Activated CD4-positive, alpha-beta T cell treated with anti-CD3 and anti-CD28 coated beads, Interleukin-2, amount 10 ng/mL, durations not matched to agents 24 days and 14 days (primary cell): ENCODE measurements at regions of chr7 and their contacts with region 1.

Region 1: DNA sequence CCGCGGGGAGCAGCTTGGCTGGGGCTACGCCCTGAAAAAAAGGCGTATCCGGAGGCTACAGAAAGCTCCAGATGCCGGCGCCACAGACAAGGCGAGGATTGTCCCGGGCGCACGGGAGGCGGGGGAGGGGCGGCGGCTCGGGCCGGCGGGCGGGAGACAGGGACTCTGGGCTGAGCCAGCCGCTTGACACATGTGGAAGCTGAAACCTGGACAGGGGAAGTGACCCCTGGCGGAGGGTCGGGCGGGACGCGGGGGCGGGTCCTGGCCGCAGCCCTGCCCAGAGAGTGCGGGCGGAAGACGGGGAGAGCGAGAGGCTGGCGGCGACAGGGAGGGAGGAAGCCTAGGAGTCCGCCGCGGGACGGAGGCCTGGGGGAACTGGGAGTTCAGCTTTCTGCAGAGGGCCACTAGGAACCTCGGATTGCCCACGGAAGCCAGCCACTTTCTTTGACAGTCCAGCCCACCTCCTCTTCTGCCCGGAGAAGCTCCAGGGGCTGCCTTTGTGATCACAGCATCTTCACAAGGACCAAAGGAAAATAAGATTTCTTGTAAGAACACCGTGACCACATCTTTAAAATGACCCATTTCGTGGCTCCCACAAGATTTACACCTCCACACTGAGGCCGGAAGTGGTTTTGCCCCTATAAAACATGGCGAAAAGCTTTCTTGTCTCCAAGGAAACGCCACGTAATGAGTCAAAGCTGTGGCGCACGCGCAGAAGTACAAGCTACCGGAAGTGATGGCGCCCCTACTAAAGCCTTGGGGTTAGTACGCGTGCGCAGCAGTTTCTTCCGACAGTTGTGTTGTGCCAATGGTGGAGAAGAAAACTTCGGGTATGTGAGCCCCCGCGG is at the starts of genes PLOD3 and ZNHIT1:
- DNase-seq: peak; percentile 98
- H3K4me3 Mint-ChIP-seq: peak within 1 kb of the TSS; percentile 99
- H3K27ac Mint-ChIP-seq: peak within 1 kb of the TSS; percentile 91
- H3K4me1 Mint-ChIP-seq: peaks cover 37% of the 10 kb centered on the region
- H3K27me3 Mint-ChIP-seq: no peaks in the 10 kb centered on the region
- total RNA-seq, gene PLOD3: 85.2 and 93.6 TPM in 2 replicates
- total RNA-seq, gene ZNHIT1: 53.8 and 54.2 TPM in 2 replicates

Region 2: DNA sequence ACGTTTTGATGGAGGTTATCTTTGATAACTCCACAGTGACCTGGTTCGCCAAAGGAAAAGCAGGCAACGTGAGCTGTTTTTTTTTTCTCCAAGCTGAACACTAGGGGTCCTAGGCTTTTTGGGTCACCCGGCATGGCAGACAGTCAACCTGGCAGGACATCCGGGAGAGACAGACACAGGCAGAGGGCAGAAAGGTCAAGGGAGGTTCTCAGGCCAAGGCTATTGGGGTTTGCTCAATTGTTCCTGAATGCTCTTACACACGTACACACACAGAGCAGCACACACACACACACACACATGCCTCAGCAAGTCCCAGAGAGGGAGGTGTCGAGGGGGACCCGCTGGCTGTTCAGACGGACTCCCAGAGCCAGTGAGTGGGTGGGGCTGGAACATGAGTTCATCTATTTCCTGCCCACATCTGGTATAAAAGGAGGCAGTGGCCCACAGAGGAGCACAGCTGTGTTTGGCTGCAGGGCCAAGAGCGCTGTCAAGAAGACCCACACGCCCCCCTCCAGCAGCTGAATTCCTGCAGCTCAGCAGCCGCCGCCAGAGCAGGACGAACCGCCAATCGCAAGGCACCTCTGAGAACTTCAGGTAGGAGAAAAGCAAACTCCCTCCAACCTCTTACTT is 90.8 kb before region 1 on chr7 and contains the start of gene SERPINE1:
- intact Hi-C with region 1: no loop called
- DNase-seq: peak; percentile 88
- H3K4me3 Mint-ChIP-seq: peak within 1 kb of the TSS; percentile 56
- H3K27ac Mint-ChIP-seq: peak within 1 kb of the TSS; percentile 56
- H3K4me1 Mint-ChIP-seq: peaks cover 47% of the 10 kb centered on the region
- H3K27me3 Mint-ChIP-seq: peaks cover 50% of the 10 kb centered on the region
- total RNA-seq, gene SERPINE1: 0.33 and 0.45 TPM in 2 replicates

Region 3: DNA sequence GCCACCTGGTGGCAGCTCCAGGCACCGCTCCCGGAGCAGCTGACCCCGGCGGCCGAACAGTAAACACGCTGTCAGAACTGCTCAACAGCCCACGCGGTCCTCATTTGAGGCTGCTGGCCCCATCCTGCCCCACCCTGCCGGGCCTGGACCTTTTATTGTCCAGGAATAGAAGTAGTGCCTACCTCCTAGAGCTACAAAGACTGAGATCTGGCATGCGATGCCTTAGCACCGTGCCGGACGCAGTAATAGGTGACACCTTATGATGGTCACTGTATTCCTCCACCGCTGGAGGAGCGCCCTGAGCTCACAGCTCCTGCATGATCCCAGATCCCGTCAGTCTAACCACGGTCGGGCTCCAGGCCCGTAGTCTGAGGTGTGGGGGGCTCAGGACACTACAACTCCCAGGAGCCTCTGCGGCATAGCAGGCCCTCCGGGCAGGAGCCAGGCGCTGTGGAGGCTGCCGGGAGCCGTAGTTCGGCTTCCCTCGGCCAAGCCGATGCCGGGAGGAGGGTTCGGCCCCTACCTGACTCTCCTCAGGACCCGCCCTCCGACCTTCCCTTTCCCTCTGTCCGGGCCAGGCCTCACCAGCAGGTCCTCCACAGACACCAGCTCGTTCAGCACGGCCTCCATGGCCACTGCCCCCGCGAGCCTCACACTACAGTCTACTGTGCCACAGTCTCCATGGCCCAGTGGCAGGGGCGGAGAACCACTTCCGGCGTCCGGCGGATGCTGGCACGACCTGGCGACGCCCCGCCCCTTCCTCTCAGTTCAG is 26.9 kb after region 1 on chr7 and contains the start of gene FIS1:
- intact Hi-C with region 1: loop called (anchors 1 kb)
- DNase-seq: peak; percentile 98
- H3K4me3 Mint-ChIP-seq: peak within 1 kb of the TSS; percentile 97
- H3K27ac Mint-ChIP-seq: peak within 1 kb of the TSS; percentile 94
- H3K4me1 Mint-ChIP-seq: peaks cover 16% of the 10 kb centered on the region
- H3K27me3 Mint-ChIP-seq: no peaks in the 10 kb centered on the region
- total RNA-seq, gene FIS1: 127 and 136 TPM in 2 replicates

Region 4: DNA sequence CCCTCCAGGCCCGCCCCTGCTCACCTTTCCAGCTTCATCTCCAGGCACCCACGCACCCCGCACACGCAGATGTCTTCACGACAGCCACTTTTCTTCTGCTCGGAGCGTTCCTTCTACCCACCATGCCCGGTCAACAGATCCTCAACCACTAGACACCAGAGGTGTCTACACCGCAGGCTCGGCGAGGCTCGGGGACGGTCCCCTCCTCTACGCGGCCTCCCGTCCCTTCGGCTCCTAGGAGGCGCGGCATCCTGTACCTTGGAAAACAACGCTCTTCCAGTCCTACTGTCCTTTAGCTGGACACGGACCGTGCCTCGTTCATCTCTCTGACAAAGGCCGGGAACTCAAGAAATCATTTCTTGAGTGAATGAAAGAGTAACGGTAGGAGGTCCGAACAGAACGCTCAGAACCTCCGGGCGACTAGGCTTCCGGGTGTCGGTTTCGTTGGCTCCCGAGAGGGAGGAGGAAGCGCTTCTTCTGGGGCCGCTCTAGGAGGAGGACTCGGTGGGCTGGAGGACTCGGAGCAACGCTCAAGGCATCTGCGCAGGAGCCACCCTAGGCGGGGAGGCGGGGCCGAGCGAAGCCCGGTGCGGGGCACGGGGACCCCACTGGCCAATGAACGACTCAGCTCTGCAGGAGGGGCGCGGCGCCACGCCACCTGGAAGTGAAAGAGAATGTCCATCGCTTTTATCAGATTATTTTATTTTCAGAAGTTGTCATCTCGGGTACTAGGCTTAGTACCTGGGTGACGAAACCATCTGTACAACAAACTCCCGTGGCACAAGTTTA is 34.5 kb after region 1 on chr7:
- intact Hi-C with region 1: loop called (anchors 2 kb)
- DNase-seq: peak; percentile 100
- H3K4me3 Mint-ChIP-seq: peak overlapping the region; percentile 97
- H3K27ac Mint-ChIP-seq: peak overlapping the region; percentile 95
- H3K4me1 Mint-ChIP-seq: peaks cover 17% of the 10 kb centered on the region
- H3K27me3 Mint-ChIP-seq: peaks cover 2% of the 10 kb centered on the region

Region 5: DNA sequence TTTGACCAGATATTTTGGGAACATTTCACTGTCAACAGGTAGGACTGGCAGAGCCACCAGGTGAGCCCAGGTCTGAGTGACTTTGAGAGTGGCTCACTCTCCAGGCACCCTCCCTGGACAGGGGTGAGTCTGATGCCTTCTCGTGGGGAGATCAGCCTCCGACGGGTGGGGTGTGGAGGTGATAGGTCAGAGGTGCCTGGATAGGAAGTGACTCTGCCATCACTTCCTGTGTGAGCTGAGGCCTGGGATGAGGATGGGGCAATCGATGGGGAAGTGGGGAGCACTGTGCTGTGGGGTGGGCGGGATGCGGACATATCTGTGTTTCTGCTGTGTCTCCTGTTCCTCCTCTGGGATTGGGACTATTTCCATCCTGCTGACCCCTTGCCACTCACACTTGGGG is 69.4 kb after region 1 on chr7:
- intact Hi-C with region 1: loop called (anchors 10 kb)
- DNase-seq: no peak
- H3K4me3 Mint-ChIP-seq: no peak overlapping the region
- H3K27ac Mint-ChIP-seq: no peak overlapping the region
- H3K4me1 Mint-ChIP-seq: peaks cover 14% of the 10 kb centered on the region
- H3K27me3 Mint-ChIP-seq: peaks cover 19% of the 10 kb centered on the region